ENCODE measurements at regions of chr17 and their contacts with region 1.

Region 1: DNA sequence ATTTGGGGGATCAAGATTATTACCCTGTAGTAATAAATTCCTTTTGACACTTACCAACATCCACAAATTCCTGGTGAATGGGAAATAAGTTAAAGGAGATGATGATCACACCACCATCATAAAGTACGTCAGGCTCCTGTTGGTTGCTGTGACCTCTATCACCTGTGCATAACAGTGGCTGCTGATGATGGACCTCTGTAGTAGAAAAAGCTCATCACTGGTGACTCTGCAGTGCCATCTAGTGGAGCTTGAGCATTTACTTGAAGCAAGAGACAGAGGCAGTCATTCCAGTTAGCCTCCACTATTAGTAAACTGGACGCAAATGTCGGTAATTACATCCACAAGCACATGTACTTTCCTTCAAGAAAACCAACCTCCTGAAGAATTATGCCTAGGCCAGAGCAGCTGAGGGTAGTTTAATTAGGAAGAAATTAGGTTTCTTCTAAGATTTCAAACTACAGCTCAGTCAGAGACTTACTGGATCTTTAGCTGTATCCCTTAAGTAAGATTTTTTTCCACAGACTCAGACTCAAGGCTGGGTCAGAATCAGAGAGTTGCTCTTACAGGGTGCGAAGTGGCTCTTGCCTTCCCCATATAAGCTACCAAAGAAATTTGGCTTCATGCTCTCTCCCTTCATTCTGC is 39.3 kb downstream of the CYB561 start:
- DNase-seq: peak; percentile 19
- H3K4me3 ChIP-seq: no peak overlapping the region
- H3K27ac ChIP-seq: no peak overlapping the region
- H3K4me1 ChIP-seq: peaks cover 0 to 5% (median 0%) of the 10 kb centered on the region in 3 donors
- H3K27me3 ChIP-seq: no peaks in the 10 kb centered on the region
- CTCF ChIP-seq: peak; percentile 58 to 88 (median 77)
- POLR2A ChIP-seq: no peak

Region 2: GRCh38 chr17:62703775-62704378 is 702.9 kb before region 1 on chr17:
- intact Hi-C with region 1: loop called (anchors 5 kb)
- DNase-seq: no peak
- H3K4me3 ChIP-seq: peak overlapping the region; percentile 53 to 91 (median 72)
- H3K27ac ChIP-seq: peak overlapping the region; percentile 66 to 91 (median 85)
- H3K4me1 ChIP-seq: peaks cover 5 to 45% (median 21%) of the 10 kb centered on the region in 3 donors
- H3K27me3 ChIP-seq: peaks cover 0 to 7% (median 0%) of the 10 kb centered on the region in 4 donors
- CTCF ChIP-seq: peak; percentile 70 to 92 (median 81)
- POLR2A ChIP-seq: no peak

Region 3: DNA sequence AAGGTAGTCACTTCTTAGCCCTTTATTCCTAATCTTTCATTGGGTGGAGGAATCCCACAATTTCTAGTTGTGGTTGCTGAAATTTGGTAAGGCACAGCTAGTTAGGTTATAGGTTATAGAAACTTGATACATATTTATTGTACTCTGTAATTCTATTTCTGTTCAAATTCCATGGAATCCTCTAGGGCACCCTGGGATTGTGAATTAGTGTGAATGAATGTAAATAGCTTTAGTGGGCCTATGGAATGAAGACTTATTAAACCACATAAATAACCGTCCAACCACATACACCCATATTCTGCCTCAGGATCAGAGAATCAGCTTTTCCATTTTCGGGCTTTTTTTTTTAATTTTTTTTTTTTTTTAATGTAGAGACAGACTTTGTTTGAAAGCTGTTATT is 431.6 kb before region 1 on chr17:
- intact Hi-C with region 1: loop called (anchors 10 kb)
- DNase-seq: no peak
- H3K4me3 ChIP-seq: no peak overlapping the region
- H3K27ac ChIP-seq: no peak overlapping the region
- H3K4me1 ChIP-seq: no peaks in the 10 kb centered on the region
- H3K27me3 ChIP-seq: no peaks in the 10 kb centered on the region
- CTCF ChIP-seq: no peak
- POLR2A ChIP-seq: no peak

Region 4: GRCh38 chr17:63240106-63240505 is 166.7 kb before region 1 on chr17:
- intact Hi-C with region 1: no loop called
- DNase-seq: no peak
- H3K4me3 ChIP-seq: no peak overlapping the region
- H3K27ac ChIP-seq: no peak overlapping the region
- H3K4me1 ChIP-seq: no peaks in the 10 kb centered on the region
- H3K27me3 ChIP-seq: no peaks in the 10 kb centered on the region
- CTCF ChIP-seq: no peak
- POLR2A ChIP-seq: no peak